Activated CD4-positive, alpha-beta T cell treated with anti-CD3 and anti-CD28 coated beads, Interleukin-2, amount 10 ng/mL, durations not matched to agents 24 days and 14 days (primary cell): ENCODE measurements at regions of chr14 and their contacts with region 1.

Region 1: GRCh38 chr14:72476657-72477499 is 417.0 kb downstream of the DPF3 start:
- DNase-seq: peak; percentile 95
- H3K4me3 Mint-ChIP-seq: peak overlapping the region; percentile 61
- H3K27ac Mint-ChIP-seq: peak overlapping the region; percentile 83
- H3K4me1 Mint-ChIP-seq: peaks cover 65% of the 10 kb centered on the region
- H3K27me3 Mint-ChIP-seq: no peaks in the 10 kb centered on the region

Region 2: GRCh38 chr14:72439707-72440106 is 37.2 kb before region 1 on chr14:
- intact Hi-C with region 1: loop called (anchors 2 kb)
- DNase-seq: peak; percentile 88
- H3K4me3 Mint-ChIP-seq: peak overlapping the region; percentile 78
- H3K27ac Mint-ChIP-seq: peak overlapping the region; percentile 77
- H3K4me1 Mint-ChIP-seq: peaks cover 88% of the 10 kb centered on the region
- H3K27me3 Mint-ChIP-seq: peaks cover 1% of the 10 kb centered on the region

Region 3: GRCh38 chr14:72451054-72451972 is 25.6 kb before region 1 on chr14:
- intact Hi-C with region 1: loop called (anchors 1 kb)
- DNase-seq: peak; percentile 84
- H3K4me3 Mint-ChIP-seq: peak overlapping the region; percentile 73
- H3K27ac Mint-ChIP-seq: peak overlapping the region; percentile 76
- H3K4me1 Mint-ChIP-seq: peaks cover 61% of the 10 kb centered on the region
- H3K27me3 Mint-ChIP-seq: peaks cover 2% of the 10 kb centered on the region

Region 4: DNA sequence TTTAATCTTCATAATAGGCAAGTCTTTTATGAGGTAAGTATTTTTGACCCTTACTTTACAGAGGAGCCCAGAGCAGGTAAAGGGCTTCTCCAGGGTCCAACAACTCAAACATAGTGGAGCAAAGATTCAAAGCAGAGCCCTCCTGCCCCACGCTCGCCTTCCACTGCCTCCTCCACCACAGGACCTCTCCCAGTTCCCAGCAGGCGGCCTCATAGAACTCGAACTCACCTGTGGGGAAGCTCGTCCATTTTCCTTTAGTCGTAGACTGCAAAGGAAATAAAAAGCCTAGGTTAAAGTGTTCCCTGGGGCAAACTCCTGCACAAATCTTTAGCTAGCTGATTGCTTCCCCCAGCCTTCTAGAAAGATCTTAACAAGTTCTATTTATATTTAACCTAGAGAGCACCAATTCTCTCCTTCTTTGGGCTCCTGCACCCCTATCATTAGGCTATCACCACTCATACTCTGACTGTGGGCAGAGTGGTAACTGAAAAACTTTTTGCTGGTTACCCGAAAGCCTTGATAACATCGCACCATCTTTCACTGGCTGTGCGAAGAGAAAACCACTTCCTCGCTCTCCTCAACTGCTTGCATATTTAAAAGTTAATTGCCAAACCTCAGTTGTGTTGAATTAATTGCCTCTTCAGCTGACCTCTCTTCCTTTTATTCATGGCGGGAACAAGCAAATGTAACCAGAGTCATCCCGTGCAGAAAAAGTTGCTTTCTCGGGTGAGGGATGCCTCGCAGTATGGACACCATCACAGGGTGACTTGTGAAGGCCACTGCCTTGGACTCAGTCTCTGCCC is 117.4 kb after region 1 on chr14:
- intact Hi-C with region 1: loop called (anchors 2 kb)
- DNase-seq: peak; percentile 90
- H3K4me3 Mint-ChIP-seq: peak overlapping the region; percentile 74
- H3K27ac Mint-ChIP-seq: peak overlapping the region; percentile 51
- H3K4me1 Mint-ChIP-seq: peaks cover 47% of the 10 kb centered on the region
- H3K27me3 Mint-ChIP-seq: peaks cover 24% of the 10 kb centered on the region